Activated naive CD4-positive, alpha-beta T cell treated with anti-CD3 and anti-CD28 coated beads for 36 hours (primary cell): ENCODE measurements at regions of chr1 and their contacts with region 1.

Region 1: GRCh38 chr1:40338745-40339424 is 21.8 kb upstream of the COL9A2 start:
- DNase-seq: peak; percentile 97
- H3K4me3 Mint-ChIP-seq: peak overlapping the region; percentile 35
- H3K27ac Mint-ChIP-seq: peak overlapping the region; percentile 72
- H3K4me1 Mint-ChIP-seq: peaks cover 52% of the 10 kb centered on the region
- H3K27me3 Mint-ChIP-seq: no peaks in the 10 kb centered on the region

Region 2: DNA sequence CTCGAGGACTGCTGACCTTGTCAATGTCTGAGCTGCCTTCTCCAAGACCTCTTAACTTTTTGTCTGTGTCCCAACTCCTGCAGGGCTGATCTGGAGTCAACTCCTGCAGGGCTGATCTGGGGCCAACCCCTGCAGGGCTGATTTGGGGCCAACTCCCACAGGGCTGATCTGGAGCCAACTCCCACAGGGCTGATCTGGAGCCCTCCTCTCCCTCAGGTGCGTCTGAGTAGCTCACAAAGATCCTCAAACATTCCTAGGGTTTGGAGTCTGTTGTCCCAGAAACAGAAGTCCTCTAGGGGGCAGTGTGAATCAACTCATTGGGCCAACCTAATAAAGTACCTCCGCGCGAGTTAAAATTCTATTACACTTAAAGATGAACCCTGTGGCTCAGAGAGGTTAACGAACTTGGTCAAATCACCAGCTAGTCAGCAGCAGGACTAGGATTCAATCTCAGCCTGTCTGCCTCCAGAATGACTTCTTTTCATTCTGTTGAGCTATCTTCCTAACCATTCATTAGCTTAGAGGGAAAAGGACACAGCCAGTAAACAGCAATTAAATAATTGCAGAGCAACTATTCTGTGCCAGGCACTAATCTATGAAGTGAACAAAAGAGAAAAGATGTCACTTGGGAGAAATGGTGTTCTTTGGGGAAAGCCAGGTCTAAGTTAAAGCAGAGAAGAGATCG is 194.9 kb before region 1 on chr1:
- CTCF ChIA-PET with region 1: interaction called, 226 read pairs
- intact Hi-C with region 1: loop called (anchors 1 kb)
- DNase-seq: peak; percentile 76
- H3K4me3 Mint-ChIP-seq: no peak overlapping the region
- H3K27ac Mint-ChIP-seq: no peak overlapping the region
- H3K4me1 Mint-ChIP-seq: peaks cover 6% of the 10 kb centered on the region
- H3K27me3 Mint-ChIP-seq: peaks cover 14% of the 10 kb centered on the region

Region 3: GRCh38 chr1:40257688-40258444 is 81.0 kb before region 1 on chr1 and contains the start of gene ZMPSTE24:
- CTCF ChIA-PET with region 1: interaction called, 4 read pairs
- intact Hi-C with region 1: loop called (anchors 2 kb)
- DNase-seq: peak; percentile 98
- H3K4me3 Mint-ChIP-seq: peak within 1 kb of the TSS; percentile 99
- H3K27ac Mint-ChIP-seq: peak within 1 kb of the TSS; percentile 100
- H3K4me1 Mint-ChIP-seq: peaks cover 35% of the 10 kb centered on the region
- H3K27me3 Mint-ChIP-seq: no peaks in the 10 kb centered on the region
- total RNA-seq, gene ZMPSTE24: 13.2 to 14.7 TPM

Region 4: DNA sequence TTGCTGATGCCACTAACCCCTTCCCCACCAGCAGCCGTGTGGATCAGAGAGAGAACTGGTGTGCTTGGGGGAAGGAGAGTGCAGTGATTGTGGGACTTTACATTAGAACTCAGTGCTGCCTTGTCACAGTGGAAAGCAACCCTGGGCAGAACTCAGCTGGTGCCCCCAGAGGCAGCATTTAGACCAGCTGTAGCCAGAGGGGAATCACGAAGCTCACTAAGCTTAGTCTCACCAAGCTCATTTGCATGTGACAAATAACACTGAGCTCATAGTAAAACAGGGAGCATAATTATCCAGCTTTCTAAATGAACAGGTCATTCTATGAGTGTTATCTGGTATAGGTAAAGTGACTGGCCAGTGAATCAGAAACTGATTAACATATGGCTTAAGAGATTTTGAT is 24.8 kb after region 1 on chr1:
- CTCF ChIA-PET with region 1: interaction called, 14 read pairs
- intact Hi-C with region 1: no loop called
- DNase-seq: peak; percentile 75
- H3K4me3 Mint-ChIP-seq: no peak overlapping the region
- H3K27ac Mint-ChIP-seq: peak overlapping the region; percentile 10
- H3K4me1 Mint-ChIP-seq: peaks cover 14% of the 10 kb centered on the region
- H3K27me3 Mint-ChIP-seq: no peaks in the 10 kb centered on the region

Region 5: DNA sequence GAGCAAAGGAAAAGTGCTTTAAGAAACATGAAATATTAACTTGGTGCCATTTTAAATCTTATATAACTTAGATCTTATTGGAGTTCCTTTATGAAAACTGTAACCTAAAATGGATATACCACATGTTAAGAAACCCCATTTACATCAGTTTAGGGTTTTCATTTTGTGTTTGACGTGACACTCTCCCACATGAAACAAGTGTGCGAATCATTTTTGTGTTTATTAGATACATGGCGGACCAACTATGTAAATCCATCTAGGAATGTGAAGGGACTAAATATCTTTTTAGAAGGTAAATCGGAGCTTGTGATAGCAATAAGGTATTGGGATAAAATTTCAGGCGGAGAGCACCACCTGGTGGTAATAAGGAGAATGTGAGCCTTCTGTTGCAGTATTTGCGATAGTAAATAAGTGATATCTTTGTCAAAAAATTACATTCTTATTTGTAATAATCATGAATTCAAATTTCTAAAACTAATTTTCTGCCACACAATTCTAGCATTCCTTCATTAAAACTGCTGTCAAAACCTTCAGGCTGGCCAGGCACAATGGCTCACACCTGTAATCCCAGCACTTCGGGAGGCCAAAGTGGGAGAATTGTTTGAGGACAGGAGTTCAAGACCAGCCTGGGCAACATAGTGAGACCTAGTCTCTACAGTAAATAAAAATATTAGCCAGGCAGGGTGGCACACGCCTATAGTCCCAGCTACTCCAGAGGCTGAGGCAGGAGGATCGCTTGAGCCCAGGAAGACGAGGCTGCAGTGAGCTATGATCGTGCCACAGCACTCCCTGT is 66.0 kb after region 1 on chr1:
- CTCF ChIA-PET with region 1: interaction called, 37 read pairs
- intact Hi-C with region 1: loop called (anchors 1 kb)
- DNase-seq: peak; percentile 62
- H3K4me3 Mint-ChIP-seq: peak overlapping the region; percentile 41
- H3K27ac Mint-ChIP-seq: peak overlapping the region; percentile 94
- H3K4me1 Mint-ChIP-seq: peaks cover 71% of the 10 kb centered on the region
- H3K27me3 Mint-ChIP-seq: no peaks in the 10 kb centered on the region

Region 6: DNA sequence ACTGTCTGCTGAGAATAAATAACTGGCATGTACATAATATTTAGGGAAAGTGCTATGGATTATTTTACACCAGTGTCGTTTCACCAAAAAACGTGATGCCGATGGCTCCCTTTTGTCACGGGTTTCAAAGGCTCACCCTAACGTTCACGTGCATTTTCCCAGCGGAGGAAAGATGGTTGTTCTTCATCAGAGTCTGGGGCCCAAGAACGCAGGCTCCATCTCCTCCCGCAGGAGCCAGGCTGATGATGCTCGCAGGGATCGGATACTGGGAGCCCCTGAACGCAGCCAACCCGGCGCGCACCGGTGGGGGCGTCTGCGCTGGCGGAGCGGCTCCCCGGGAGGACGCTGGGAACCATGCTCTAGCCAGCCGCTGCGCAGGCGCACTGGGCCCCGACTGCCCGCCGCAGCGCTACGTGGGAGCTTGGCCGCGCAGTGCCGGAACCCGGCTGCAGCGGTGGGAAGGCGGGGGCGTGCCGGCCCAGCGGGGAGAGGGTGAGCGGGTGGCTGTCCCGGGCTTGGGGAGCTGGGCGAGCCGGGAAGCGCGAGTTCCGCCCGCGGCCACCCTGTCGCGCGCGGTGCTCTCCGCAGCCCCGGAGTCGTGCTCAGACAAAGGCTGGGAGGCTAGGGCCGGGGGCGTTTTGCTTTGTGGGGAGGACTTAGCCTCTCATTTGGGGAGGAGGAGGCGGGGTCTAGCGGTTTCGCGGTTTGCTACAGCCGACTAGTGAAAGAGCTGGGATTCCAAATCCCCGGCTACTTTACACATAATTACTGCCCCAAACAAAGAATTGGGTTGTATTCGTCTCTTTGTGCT is 111.0 kb after region 1 on chr1 and contains the start of gene ZFP69B:
- CTCF ChIA-PET with region 1: no interaction called
- intact Hi-C with region 1: loop called (anchors 1 kb)
- DNase-seq: peak; percentile 95
- H3K4me3 Mint-ChIP-seq: peak within 1 kb of the TSS; percentile 80
- H3K27ac Mint-ChIP-seq: peak within 1 kb of the TSS; percentile 93
- H3K4me1 Mint-ChIP-seq: peaks cover 32% of the 10 kb centered on the region
- H3K27me3 Mint-ChIP-seq: no peaks in the 10 kb centered on the region
- total RNA-seq, gene ZFP69B: 11.2 to 11.3 TPM

Region 7: GRCh38 chr1:41713557-41714327 is 1374.9 kb after region 1 on chr1:
- CTCF ChIA-PET with region 1: no interaction called
- intact Hi-C with region 1: no loop called
- DNase-seq: no peak
- H3K4me3 Mint-ChIP-seq: no peak overlapping the region
- H3K27ac Mint-ChIP-seq: peak overlapping the region; percentile 27
- H3K4me1 Mint-ChIP-seq: peaks cover 13% of the 10 kb centered on the region
- H3K27me3 Mint-ChIP-seq: no peaks in the 10 kb centered on the region